Activated T-helper 1 cell treated with anti-CD3 and anti-CD28 coated beads, Interleukin-12 subunit alpha, Interleukin-12 subunit beta, Interleukin-2, Interleukin-4 antibody, amounts not matched to agents 30 ng/mL and 10 ng/mL and 1 ng/mL, durations not matched to agents 14 hours and 24 hours and 36 hours (primary cell): ENCODE measurements at regions of chr17 and their contacts with region 1.

Region 1: GRCh38 chr17:82351716-82352488 is 7.1 kb upstream of the TEX19 start:
- DNase-seq: peak; percentile 73
- H3K4me3 Mint-ChIP-seq: no peak overlapping the region
- H3K27ac Mint-ChIP-seq: no peak overlapping the region
- H3K4me1 Mint-ChIP-seq: no peaks in the 10 kb centered on the region
- H3K27me3 Mint-ChIP-seq: no peaks in the 10 kb centered on the region

Region 2: DNA sequence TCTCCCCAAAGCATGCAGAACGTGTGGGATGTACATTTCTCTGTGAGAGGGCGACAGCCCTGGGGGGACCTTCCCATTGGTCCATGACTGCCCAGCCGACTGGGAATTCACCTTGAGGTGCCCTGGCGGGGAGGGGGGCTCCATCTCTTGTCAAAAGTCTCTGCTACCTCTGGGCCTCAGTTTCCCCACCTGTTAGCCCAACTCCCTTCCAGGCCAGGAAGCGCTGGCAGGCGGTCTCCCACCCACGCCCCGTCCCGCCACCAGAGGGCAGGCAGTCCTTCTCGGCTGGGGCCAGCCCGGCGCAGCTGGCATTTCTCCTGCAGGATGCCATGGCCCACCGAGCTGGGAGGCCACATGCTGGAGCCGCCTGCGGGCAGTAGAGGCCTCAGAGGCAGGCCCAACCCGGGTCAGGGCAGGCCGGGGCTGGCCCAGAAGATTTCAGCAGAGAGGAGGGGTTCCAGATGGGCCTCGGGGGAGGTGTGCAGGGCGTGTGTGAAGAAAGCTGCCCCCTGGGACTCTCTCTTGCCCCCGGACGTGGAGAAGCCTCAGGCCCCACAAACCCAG is 51.1 kb before region 1 on chr17:
- intact Hi-C with region 1: no loop called
- DNase-seq: peak; percentile 48
- H3K4me3 Mint-ChIP-seq: peak overlapping the region; percentile 89
- H3K27ac Mint-ChIP-seq: peak overlapping the region; percentile 98
- H3K4me1 Mint-ChIP-seq: peaks cover 75% of the 10 kb centered on the region
- H3K27me3 Mint-ChIP-seq: no peaks in the 10 kb centered on the region

Region 3: GRCh38 chr17:82386881-82387704 is 35.2 kb after region 1 on chr17:
- intact Hi-C with region 1: loop called (anchors 1 kb)
- DNase-seq: no peak
- H3K4me3 Mint-ChIP-seq: no peak overlapping the region
- H3K27ac Mint-ChIP-seq: no peak overlapping the region
- H3K4me1 Mint-ChIP-seq: peaks cover 4% of the 10 kb centered on the region
- H3K27me3 Mint-ChIP-seq: no peaks in the 10 kb centered on the region

Region 4: DNA sequence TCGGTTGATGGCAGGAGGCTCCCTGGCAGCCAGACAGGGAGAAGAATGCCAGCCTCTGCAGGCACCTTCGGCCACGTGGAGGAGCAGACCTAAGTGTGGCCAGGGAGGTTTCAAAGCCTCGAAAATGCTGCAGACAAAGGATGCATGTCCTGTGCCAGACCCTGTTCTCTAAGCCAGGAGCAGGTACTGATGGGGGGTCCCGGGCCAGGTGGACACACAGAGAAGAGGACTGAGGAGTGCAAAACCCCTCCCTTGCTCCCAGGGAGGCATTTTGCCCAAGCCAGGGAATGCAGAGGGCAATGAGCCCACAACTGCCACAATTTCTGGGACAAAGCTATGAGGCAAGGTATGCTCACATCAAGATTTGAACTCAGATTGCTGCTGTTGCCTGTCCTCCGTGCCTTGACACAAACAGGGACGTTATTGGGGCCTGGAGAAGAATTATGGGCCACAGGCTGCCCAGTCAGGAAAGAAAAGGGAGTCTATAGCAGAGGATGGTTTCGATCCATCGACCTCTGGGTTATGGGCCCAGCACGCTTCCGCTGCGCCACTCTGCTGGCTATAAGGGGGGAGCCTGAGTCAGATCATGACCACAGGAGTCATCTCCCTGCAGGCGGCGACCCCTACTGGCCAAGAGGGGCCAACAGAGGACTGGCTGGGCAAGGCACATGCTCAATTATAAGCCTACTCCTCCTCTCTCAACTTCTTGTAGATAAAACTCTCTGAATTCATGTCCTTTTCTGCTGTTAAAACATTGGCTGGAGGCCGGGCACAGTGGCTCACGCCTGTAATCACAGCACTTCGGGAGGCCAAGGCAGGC is 142.5 kb after region 1 on chr17:
- intact Hi-C with region 1: loop called (anchors 1 kb)
- DNase-seq: peak; percentile 81
- H3K4me3 Mint-ChIP-seq: peak overlapping the region; percentile 12
- H3K27ac Mint-ChIP-seq: peak overlapping the region; percentile 87
- H3K4me1 Mint-ChIP-seq: peaks cover 29% of the 10 kb centered on the region
- H3K27me3 Mint-ChIP-seq: peaks cover 2% of the 10 kb centered on the region

Region 5: DNA sequence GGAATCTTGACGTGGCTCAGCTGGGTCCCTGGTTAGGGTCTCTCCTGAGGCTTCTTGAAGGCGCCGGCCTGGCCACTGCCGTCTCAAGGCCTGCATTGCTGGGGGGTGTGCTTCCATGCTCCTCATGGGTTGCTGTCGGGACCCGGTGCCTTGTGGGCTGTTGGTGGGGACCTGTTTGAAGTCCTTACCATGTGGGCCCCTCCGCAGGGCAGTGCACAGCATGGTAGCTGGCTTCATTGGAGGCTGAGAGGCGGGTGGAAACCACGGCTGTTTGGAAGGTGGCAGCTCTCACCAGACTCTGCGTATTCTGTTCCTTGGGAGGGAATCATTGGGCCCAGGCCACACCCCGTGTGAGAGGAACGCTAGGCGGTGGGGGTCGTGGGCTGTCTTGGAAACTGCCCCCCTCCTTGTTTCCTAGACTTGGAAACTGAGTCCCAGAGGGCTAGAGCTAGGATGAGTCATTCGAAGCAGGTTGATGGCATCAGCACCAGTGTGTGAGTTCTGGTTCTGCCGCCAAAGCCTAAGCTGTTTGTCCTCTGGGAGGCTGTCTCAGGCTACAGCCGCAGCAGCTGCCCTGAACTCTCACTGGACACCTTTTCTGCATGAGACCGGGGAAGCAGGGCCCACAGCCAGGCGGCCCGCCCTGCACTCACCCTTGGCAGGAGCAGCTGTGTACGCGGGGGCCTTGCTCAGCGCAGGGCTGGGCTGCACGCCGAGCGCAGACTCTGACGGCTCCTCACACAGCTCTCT is 452.7 kb after region 1 on chr17:
- intact Hi-C with region 1: no loop called
- DNase-seq: no peak
- H3K4me3 Mint-ChIP-seq: no peak overlapping the region
- H3K27ac Mint-ChIP-seq: no peak overlapping the region
- H3K4me1 Mint-ChIP-seq: no peaks in the 10 kb centered on the region
- H3K27me3 Mint-ChIP-seq: no peaks in the 10 kb centered on the region